Mammary epithelial cell (primary cell): ENCODE measurements at regions of chr2 and their contacts with region 1.

Region 1: GRCh38 chr2:177164584-177165052 is 48.0 kb upstream of the HNRNPA3 start:
- DNase-seq: peak; percentile 66
- H3K4me3 ChIP-seq: peak overlapping the region; percentile 21 to 30 (median 29)
- H3K27ac ChIP-seq: peak overlapping the region; percentile 69
- H3K4me1 ChIP-seq: peaks cover 36% of the 10 kb centered on the region
- H3K27me3 ChIP-seq: no peaks in the 10 kb centered on the region
- CTCF ChIP-seq: peak; percentile 100

Region 2: GRCh38 chr2:176126929-176127773 is 1037.5 kb before region 1 on chr2:
- CTCF ChIA-PET with region 1: no interaction called
- dilution Hi-C with region 1: no loop called
- in situ Hi-C with region 1: loop called in 1 of 2 experiments (anchors 10 kb)
- intact Hi-C with region 1: loop called (anchors 1 kb)
- DNase-seq: no peak
- H3K4me3 ChIP-seq: no peak overlapping the region
- H3K27ac ChIP-seq: no peak overlapping the region
- H3K4me1 ChIP-seq: peaks cover 8% of the 10 kb centered on the region
- H3K27me3 ChIP-seq: peaks cover 88% of the 10 kb centered on the region
- CTCF ChIP-seq: peak; percentile 74

Region 3: GRCh38 chr2:176924909-176925534 is 239.6 kb before region 1 on chr2:
- CTCF ChIA-PET with region 1: no interaction called
- dilution Hi-C with region 1: no loop called
- in situ Hi-C with region 1: no loop called
- intact Hi-C with region 1: no loop called
- DNase-seq: no peak
- H3K4me3 ChIP-seq: no peak overlapping the region
- H3K27ac ChIP-seq: no peak overlapping the region
- H3K4me1 ChIP-seq: no peaks in the 10 kb centered on the region
- H3K27me3 ChIP-seq: no peaks in the 10 kb centered on the region
- CTCF ChIP-seq: no peak

Region 4: DNA sequence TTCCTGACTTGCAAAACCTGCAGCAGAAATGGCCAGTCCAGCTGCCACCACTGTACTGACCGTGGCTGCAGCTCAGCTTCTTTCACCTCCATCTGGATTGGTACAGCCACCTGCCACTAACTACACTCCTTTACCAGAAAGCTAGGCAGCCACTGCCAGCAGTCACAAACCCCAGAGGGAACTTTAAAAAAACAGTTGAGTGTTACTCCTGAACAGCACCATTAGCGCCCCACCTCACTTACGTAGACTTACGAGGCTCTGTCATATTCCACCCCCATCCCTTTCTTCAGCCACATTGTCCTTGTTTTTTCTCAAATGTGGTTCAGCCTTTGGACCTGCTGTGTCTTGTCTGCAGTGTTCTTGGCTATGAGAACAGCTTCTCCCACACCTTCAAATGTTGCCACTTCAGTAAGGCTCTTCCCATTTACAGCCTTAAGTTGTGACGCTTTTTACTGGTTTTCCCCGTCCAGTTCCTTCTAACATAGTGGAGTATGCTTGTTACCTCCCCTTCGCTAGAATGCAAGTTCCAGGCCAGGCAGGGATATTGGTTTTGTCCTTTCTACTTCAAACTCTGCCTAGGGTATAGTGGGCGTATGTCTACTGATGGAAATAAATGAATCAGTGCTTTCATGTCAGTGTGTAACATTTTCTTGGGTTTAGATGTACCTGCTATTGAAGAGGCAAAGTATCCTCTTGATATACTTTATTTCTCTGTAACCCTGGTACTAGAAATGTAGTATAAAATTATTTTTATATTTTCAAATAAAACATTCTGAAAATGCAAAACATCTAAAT is 65.0 kb after region 1 on chr2:
- CTCF ChIA-PET with region 1: no interaction called
- dilution Hi-C with region 1: no loop called
- in situ Hi-C with region 1: no loop called
- intact Hi-C with region 1: loop called (anchors 2 kb)
- DNase-seq: peak; percentile 81
- H3K4me3 ChIP-seq: no peak overlapping the region
- H3K27ac ChIP-seq: peak overlapping the region; percentile 54
- H3K4me1 ChIP-seq: peaks cover 6% of the 10 kb centered on the region
- H3K27me3 ChIP-seq: no peaks in the 10 kb centered on the region
- CTCF ChIP-seq: no peak

Region 5: GRCh38 chr2:177296040-177296439 is 131.4 kb after region 1 on chr2:
- CTCF ChIA-PET with region 1: no interaction called
- dilution Hi-C with region 1: no loop called
- in situ Hi-C with region 1: no loop called
- intact Hi-C with region 1: loop called (anchors 1 kb)
- DNase-seq: peak; percentile 19
- H3K4me3 ChIP-seq: no peak overlapping the region
- H3K27ac ChIP-seq: no peak overlapping the region
- H3K4me1 ChIP-seq: peaks cover 4% of the 10 kb centered on the region
- H3K27me3 ChIP-seq: no peaks in the 10 kb centered on the region
- CTCF ChIP-seq: peak; percentile 35 to 43

Region 6: GRCh38 chr2:177306550-177306949 is 141.9 kb after region 1 on chr2:
- CTCF ChIA-PET with region 1: no interaction called
- dilution Hi-C with region 1: no loop called
- in situ Hi-C with region 1: no loop called
- intact Hi-C with region 1: no loop called
- DNase-seq: no peak
- H3K4me3 ChIP-seq: no peak overlapping the region
- H3K27ac ChIP-seq: no peak overlapping the region
- H3K4me1 ChIP-seq: peaks cover 5% of the 10 kb centered on the region
- H3K27me3 ChIP-seq: no peaks in the 10 kb centered on the region
- CTCF ChIP-seq: no peak

Region 7: GRCh38 chr2:177397481-177398289 is 233.1 kb after region 1 on chr2:
- CTCF ChIA-PET with region 1: no interaction called
- dilution Hi-C with region 1: no loop called
- in situ Hi-C with region 1: no loop called
- intact Hi-C with region 1: loop called (anchors 5 kb)
- DNase-seq: peak; percentile 77
- H3K4me3 ChIP-seq: no peak overlapping the region
- H3K27ac ChIP-seq: peak overlapping the region; percentile 40
- H3K4me1 ChIP-seq: peaks cover 30% of the 10 kb centered on the region
- H3K27me3 ChIP-seq: no peaks in the 10 kb centered on the region
- CTCF ChIP-seq: no peak

Region 8: DNA sequence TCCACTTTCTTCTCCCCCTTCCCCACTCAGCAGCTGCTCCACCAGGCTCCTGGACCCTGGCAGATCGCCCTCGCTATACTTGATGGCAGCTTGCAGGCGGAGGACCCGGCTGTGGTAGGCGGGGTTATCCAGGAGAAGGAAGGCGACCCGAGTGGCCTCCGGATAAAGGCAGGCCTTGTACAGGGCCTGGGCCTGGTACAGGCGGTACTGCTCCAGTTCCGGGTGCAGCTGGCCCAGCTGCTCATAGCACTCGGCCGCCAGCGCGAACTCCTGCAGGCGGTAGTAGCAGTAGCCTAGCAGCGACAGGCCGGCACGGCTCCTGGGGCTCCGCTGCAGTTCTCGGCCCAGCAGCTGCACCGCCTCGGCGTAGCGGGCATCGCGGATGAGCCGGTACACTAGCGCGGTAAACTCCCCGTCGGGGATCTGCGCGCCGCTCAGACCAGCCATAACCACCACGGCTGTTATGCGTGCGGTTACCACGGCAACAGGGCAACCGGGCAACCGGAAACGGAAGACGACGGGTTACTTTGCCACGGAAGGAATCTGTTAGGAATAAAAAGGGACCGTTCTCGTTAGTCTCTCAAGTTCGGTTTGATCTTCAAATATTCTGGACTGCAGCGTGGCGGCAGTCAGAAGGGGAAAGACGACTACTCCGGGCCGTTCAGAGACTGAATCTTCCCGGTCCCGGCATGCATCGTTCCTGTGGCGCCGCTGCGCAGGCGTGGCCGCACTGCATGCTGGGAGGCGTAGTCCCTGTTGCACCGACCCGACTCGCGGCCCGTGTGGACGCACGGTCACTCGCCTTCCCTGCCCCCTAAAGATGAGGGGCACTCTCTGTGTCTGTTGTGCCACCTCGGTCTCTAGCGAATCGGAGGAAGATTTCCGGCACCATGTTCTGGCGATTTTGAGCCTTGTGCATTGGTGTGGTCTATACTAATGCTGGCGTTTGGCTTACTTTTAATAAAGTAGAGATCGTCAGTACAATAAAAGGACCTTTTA is 453.9 kb after region 1 on chr2:
- CTCF ChIA-PET with region 1: interaction called, 3 read pairs
- dilution Hi-C with region 1: no loop called
- in situ Hi-C with region 1: loop called in 1 of 2 experiments (anchors 25 kb)
- intact Hi-C with region 1: no loop called
- DNase-seq: peak; percentile 83
- H3K4me3 ChIP-seq: peak overlapping the region; percentile 55 to 82 (median 80)
- H3K27ac ChIP-seq: peak overlapping the region; percentile 99
- H3K4me1 ChIP-seq: peaks cover 4% of the 10 kb centered on the region
- H3K27me3 ChIP-seq: no peaks in the 10 kb centered on the region
- CTCF ChIP-seq: no peak